Activated CD4-positive, alpha-beta T cell treated with anti-CD3 and anti-CD28 coated beads, Interleukin-2, amount 10 ng/mL, durations not matched to agents 24 days and 14 days (primary cell): ENCODE measurements at regions of chr1 and their contacts with region 1.

Region 1: DNA sequence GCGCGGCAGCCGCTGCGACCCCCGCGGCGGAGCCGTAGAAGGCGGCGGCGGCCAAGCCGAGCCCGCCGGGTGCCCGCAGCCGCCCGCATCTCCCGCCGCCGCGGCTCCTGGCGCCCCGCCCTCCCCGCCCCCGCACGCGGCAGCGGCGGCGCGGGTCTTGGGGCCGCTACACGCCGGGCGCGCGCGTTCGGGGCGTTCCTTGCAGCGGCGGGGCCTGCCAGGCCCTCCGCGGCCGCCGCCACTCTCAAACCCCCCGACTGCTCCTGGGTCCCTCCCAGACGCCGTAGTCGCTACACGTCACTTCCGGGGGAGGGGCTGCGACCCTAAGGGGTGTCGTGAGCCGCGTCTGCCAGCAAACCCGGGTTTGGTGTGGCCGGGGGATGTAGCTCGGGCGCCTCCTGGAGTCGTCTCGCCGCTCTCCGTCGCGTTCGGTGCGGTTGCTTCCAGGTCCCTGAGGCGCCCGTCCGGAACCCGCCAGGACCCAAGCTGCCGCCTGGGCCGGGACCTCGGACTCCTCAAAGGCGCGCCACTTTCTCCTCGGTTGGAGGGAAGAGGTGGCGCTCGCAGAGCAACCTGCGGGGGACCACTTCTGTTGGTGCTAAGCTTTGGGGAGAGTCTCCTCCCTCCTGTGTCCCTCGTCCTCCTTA is at the start of gene ELK4:
- DNase-seq: peak; percentile 100
- H3K4me3 Mint-ChIP-seq: peak within 1 kb of the TSS; percentile 96
- H3K27ac Mint-ChIP-seq: peak within 1 kb of the TSS; percentile 97
- H3K4me1 Mint-ChIP-seq: peaks cover 35% of the 10 kb centered on the region
- H3K27me3 Mint-ChIP-seq: peaks cover 7% of the 10 kb centered on the region
- total RNA-seq, gene ELK4: 81.8 and 83.1 TPM in 2 replicates

Region 2: GRCh38 chr1:205172729-205173366 is 459.0 kb before region 1 on chr1:
- intact Hi-C with region 1: no loop called
- DNase-seq: no peak
- H3K4me3 Mint-ChIP-seq: peak overlapping the region; percentile 54
- H3K27ac Mint-ChIP-seq: peak overlapping the region; percentile 79
- H3K4me1 Mint-ChIP-seq: peaks cover 17% of the 10 kb centered on the region
- H3K27me3 Mint-ChIP-seq: no peaks in the 10 kb centered on the region

Region 3: GRCh38 chr1:205284343-205285144 is 347.3 kb before region 1 on chr1:
- intact Hi-C with region 1: loop called (anchors 5 kb)
- DNase-seq: peak; percentile 96
- H3K4me3 Mint-ChIP-seq: peak overlapping the region; percentile 62
- H3K27ac Mint-ChIP-seq: peak overlapping the region; percentile 91
- H3K4me1 Mint-ChIP-seq: peaks cover 79% of the 10 kb centered on the region
- H3K27me3 Mint-ChIP-seq: peaks cover 6% of the 10 kb centered on the region

Region 4: GRCh38 chr1:205591522-205592351 is 40.1 kb before region 1 on chr1:
- intact Hi-C with region 1: loop called (anchors 1 kb)
- DNase-seq: peak; percentile 97
- H3K4me3 Mint-ChIP-seq: peak overlapping the region; percentile 91
- H3K27ac Mint-ChIP-seq: peak overlapping the region; percentile 92
- H3K4me1 Mint-ChIP-seq: peaks cover 44% of the 10 kb centered on the region
- H3K27me3 Mint-ChIP-seq: no peaks in the 10 kb centered on the region

Region 5: DNA sequence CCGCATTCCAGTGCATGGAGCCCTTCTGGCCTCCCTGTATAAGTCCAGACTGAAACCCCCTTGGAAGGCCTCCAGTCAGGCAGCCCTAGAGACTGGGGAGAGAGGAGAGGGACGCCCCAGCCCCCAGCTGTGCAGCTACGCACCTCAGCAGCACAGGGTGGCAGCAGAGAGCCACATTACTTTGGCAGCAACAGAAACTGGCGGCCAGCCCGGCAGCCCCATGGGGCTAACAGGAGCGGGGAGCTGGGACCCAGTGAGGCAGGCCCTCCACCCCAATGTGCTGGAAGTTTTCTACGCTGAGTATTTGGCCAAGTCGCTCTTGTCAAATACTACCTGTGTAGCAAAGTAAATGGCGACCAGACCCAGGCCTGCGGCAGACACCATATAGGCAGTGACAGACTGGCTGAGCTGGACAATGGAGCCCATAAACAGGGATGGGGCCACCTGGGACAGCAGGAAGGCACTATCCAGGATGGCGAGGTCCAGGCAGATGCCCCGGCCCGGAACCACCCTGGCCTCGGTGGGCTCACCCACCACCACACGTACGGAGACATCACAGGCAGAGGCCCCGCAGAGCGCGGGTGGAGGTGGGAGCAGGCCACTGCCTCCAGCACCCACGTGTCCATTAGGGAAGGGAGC is 27.2 kb after region 1 on chr1:
- intact Hi-C with region 1: loop called (anchors 2 kb)
- DNase-seq: peak; percentile 94
- H3K4me3 Mint-ChIP-seq: no peak overlapping the region
- H3K27ac Mint-ChIP-seq: no peak overlapping the region
- H3K4me1 Mint-ChIP-seq: peaks cover 2% of the 10 kb centered on the region
- H3K27me3 Mint-ChIP-seq: peaks cover 11% of the 10 kb centered on the region

Region 6: GRCh38 chr1:205775015-205775716 is 143.3 kb after region 1 on chr1 and contains the start of gene RAB29:
- intact Hi-C with region 1: loop called (anchors 1 kb)
- DNase-seq: peak; percentile 96
- H3K4me3 Mint-ChIP-seq: peak within 1 kb of the TSS; percentile 96
- H3K27ac Mint-ChIP-seq: peak within 1 kb of the TSS; percentile 95
- H3K4me1 Mint-ChIP-seq: peaks cover 51% of the 10 kb centered on the region
- H3K27me3 Mint-ChIP-seq: no peaks in the 10 kb centered on the region
- total RNA-seq, gene RAB29: 27.8 and 29.1 TPM in 2 replicates